ENCODE measurements at regions of chr16 and their contacts with region 1.

Region 1: GRCh38 chr16:17939122-17939536 is 397.4 kb downstream of the NPIPA8 start:
- DNase-seq: no peak
- ATAC-seq: peak; percentile 81
- H3K4me3 ChIP-seq: peak overlapping the region; percentile 48
- H3K27ac ChIP-seq: peak overlapping the region; percentile 71
- H3K4me1 ChIP-seq: peaks cover 18% of the 10 kb centered on the region
- H3K27me3 ChIP-seq: no peaks in the 10 kb centered on the region
- CTCF ChIP-seq: no peak
- EP300 ChIP-seq: no peak
- POLR2A ChIP-seq: no peak
- RAD21 ChIP-seq: no peak

Region 2: GRCh38 chr16:17858061-17858460 is 81.1 kb before region 1 on chr16:
- CTCF ChIA-PET with region 1: no interaction called
- POLR2A ChIA-PET with region 1: no interaction called
- RAD21 ChIA-PET with region 1: no interaction called
- SMC1A ChIA-PET with region 1: no interaction called
- in situ Hi-C with region 1: no loop called
- intact Hi-C with region 1: no loop called
- DNase-seq: no peak
- ATAC-seq: no peak
- H3K4me3 ChIP-seq: no peak overlapping the region
- H3K27ac ChIP-seq: no peak overlapping the region
- H3K4me1 ChIP-seq: no peaks in the 10 kb centered on the region
- H3K27me3 ChIP-seq: no peaks in the 10 kb centered on the region
- CTCF ChIP-seq: no peak
- EP300 ChIP-seq: no peak
- POLR2A ChIP-seq: no peak
- RAD21 ChIP-seq: no peak

Region 3: GRCh38 chr16:17921355-17921953 is 17.7 kb before region 1 on chr16:
- CTCF ChIA-PET with region 1: interaction called, 20 read pairs
- POLR2A ChIA-PET with region 1: no interaction called
- RAD21 ChIA-PET with region 1: interaction called, 4 read pairs
- SMC1A ChIA-PET with region 1: interaction called, 7 read pairs
- in situ Hi-C with region 1: no loop called
- intact Hi-C with region 1: no loop called
- DNase-seq: no peak
- ATAC-seq: peak; percentile 93
- H3K4me3 ChIP-seq: no peak overlapping the region
- H3K27ac ChIP-seq: no peak overlapping the region
- H3K4me1 ChIP-seq: no peaks in the 10 kb centered on the region
- H3K27me3 ChIP-seq: no peaks in the 10 kb centered on the region
- CTCF ChIP-seq: peak; percentile 69 to 81 (median 79)
- EP300 ChIP-seq: no peak
- POLR2A ChIP-seq: no peak
- RAD21 ChIP-seq: peak; percentile 74

Region 4: DNA sequence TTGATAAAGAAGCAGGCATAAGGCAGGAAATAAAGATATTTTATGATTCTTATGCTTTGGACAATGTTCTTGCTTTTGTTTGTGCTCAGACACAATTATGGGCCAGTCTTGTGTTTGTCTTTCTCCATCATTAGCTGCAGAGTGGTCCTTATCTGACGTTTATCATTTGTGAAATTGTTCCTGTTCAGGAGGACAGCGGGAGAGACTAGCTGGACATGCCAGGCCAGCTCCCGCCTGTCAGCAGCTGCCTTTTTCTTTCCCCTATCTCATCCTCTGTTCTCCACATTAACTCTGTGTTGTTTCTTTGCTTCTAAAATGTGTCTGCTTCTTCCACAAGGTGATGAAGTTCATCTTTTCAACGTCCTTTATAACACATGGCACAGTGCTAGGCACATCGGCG is 63.9 kb after region 1 on chr16:
- CTCF ChIA-PET with region 1: no interaction called
- POLR2A ChIA-PET with region 1: no interaction called
- RAD21 ChIA-PET with region 1: no interaction called
- SMC1A ChIA-PET with region 1: no interaction called
- in situ Hi-C with region 1: no loop called
- intact Hi-C with region 1: no loop called
- DNase-seq: no peak
- ATAC-seq: no peak
- H3K4me3 ChIP-seq: no peak overlapping the region
- H3K27ac ChIP-seq: no peak overlapping the region
- H3K4me1 ChIP-seq: no peaks in the 10 kb centered on the region
- H3K27me3 ChIP-seq: no peaks in the 10 kb centered on the region
- CTCF ChIP-seq: no peak
- EP300 ChIP-seq: no peak
- POLR2A ChIP-seq: no peak
- RAD21 ChIP-seq: no peak